ENCODE measurements at regions of chr1 and their contacts with region 1.

Region 1: GRCh38 chr1:52127181-52128180 is 14.4 kb upstream of the ZFYVE9 start:
- DNase-seq: peak; percentile 37 to 59
- ATAC-seq: peak; percentile 86 to 95
- H3K4me3 ChIP-seq: no peak overlapping the region
- H3K27ac ChIP-seq: no peak overlapping the region
- H3K4me1 ChIP-seq: no peaks in the 10 kb centered on the region
- CTCF ChIP-seq: peak; percentile 77
- EP300 ChIP-seq: no peak
- POLR2A ChIP-seq: no peak
- RAD21 ChIP-seq: peak; percentile 65 to 71

Region 2: GRCh38 chr1:51973603-51974474 is 153.6 kb before region 1 on chr1:
- CTCF ChIA-PET with region 1: no interaction called
- POLR2A ChIA-PET with region 1: no interaction called
- DNase-seq: no peak
- ATAC-seq: no peak
- H3K4me3 ChIP-seq: no peak overlapping the region
- H3K27ac ChIP-seq: peak overlapping the region in 1 of 2 experiments; percentile 17; a peak in 2 of 6 replicates
- H3K4me1 ChIP-seq: peaks cover 61% of the 10 kb centered on the region
- CTCF ChIP-seq: no peak
- EP300 ChIP-seq: no peak
- POLR2A ChIP-seq: no peak
- RAD21 ChIP-seq: no peak

Region 3: GRCh38 chr1:52111492-52111891 is 16.0 kb before region 1 on chr1:
- CTCF ChIA-PET with region 1: interaction called, 10 read pairs
- POLR2A ChIA-PET with region 1: no interaction called
- DNase-seq: no peak
- ATAC-seq: no peak
- H3K4me3 ChIP-seq: no peak overlapping the region
- H3K27ac ChIP-seq: no peak overlapping the region
- H3K4me1 ChIP-seq: no peaks in the 10 kb centered on the region
- CTCF ChIP-seq: no peak
- EP300 ChIP-seq: no peak
- POLR2A ChIP-seq: no peak
- RAD21 ChIP-seq: no peak

Region 4: GRCh38 chr1:52296345-52296744 is 168.9 kb after region 1 on chr1:
- CTCF ChIA-PET with region 1: interaction called, 21 read pairs
- POLR2A ChIA-PET with region 1: no interaction called
- DNase-seq: peak; percentile 36 to 46
- ATAC-seq: peak; percentile 71 to 86; a peak in 5 of 6 replicates
- H3K4me3 ChIP-seq: no peak overlapping the region
- H3K27ac ChIP-seq: no peak overlapping the region
- H3K4me1 ChIP-seq: no peaks in the 10 kb centered on the region
- CTCF ChIP-seq: peak; percentile 63
- EP300 ChIP-seq: no peak
- POLR2A ChIP-seq: no peak
- RAD21 ChIP-seq: peak; percentile 59 to 72

Measured in A549 (cell line).